WTC11 (cell line): ENCODE measurements at regions of chr11 and their contacts with region 1.

Region 1: GRCh38 chr11:82900277-82901164 is at the start of gene PRCP:
- DNase-seq: peak; percentile 95
- ATAC-seq: peak; percentile 90
- H3K4me3 Mint-ChIP-seq: peak within 1 kb of the TSS; percentile 100
- H3K27ac Mint-ChIP-seq: peak within 1 kb of the TSS; percentile 100
- H3K4me1 Mint-ChIP-seq: peaks cover 28% of the 10 kb centered on the region
- H3K27me3 Mint-ChIP-seq: no peaks in the 10 kb centered on the region; the same call in 1 of the 2 replicates
- CTCF ChIP-seq: no peak
- total RNA-seq, gene PRCP: 53.9 to 65.1 TPM (median 63.4 TPM) in 3 replicates

Region 2: GRCh38 chr11:82733444-82734119 is 166.9 kb before region 1 on chr11 and contains the start of gene FAM181B:
- CTCF ChIA-PET with region 1: interaction called, 5 read pairs
- POLR2A ChIA-PET with region 1: interaction called, 12 read pairs
- DNase-seq: peak; percentile 83
- ATAC-seq: peak; percentile 81
- H3K4me3 Mint-ChIP-seq: peak within 1 kb of the TSS; percentile 68
- H3K27ac Mint-ChIP-seq: no peak within 1 kb of the TSS
- H3K4me1 Mint-ChIP-seq: peaks cover 34% of the 10 kb centered on the region
- H3K27me3 Mint-ChIP-seq: peaks cover 59% of the 10 kb centered on the region
- CTCF ChIP-seq: no peak
- total RNA-seq, gene FAM181B: 0.80 to 1.1 TPM (median 1.0 TPM) in 3 replicates

Region 3: DNA sequence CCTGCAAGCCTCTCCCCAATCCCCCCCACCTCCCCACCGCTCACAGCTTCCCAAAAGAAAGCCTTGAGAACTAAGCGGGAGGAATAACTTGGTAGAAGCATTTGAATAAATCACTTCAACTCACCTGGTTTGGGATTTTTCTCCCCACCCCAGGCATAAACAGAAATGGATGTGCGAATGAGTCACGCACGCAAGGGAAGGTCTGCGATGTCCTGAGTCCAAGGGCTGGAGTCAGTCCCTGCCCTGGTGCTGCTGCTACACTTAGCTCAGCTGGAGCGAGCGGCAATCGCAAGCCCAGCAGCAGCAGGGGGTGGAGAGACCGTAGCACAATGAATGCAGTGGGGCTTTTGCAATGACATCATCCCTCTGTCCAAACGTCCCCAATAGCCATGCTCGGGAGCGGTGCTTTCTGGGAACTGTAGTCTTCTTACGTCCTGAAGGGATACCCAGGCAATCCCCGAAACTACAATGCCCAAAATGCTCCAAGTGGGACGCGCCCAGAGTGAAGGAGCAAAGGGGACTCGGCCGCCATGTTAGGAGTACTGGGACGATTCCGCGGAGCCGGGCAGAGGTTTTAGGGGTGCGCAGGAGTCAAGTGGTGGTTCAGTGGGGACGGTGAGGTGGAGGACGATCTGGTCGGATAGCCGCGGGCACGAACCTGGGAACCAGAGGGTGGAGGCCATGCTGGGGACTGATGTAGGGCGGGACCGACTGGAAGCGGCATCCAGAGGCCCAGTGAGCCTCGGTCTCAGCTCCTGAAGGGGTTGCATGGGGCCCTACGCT is 171.2 kb after region 1 on chr11 and contains the start of gene RAB30:
- CTCF ChIA-PET with region 1: no interaction called
- POLR2A ChIA-PET with region 1: interaction called, 21 read pairs
- DNase-seq: peak; percentile 95
- ATAC-seq: peak; percentile 97
- H3K4me3 Mint-ChIP-seq: no peak within 1 kb of the TSS
- H3K27ac Mint-ChIP-seq: no peak within 1 kb of the TSS
- H3K4me1 Mint-ChIP-seq: peaks cover 36% of the 10 kb centered on the region
- H3K27me3 Mint-ChIP-seq: no peaks in the 10 kb centered on the region
- CTCF ChIP-seq: no peak
- total RNA-seq, gene RAB30: 6.2 to 7.5 TPM (median 6.7 TPM) in 3 replicates

Region 4: DNA sequence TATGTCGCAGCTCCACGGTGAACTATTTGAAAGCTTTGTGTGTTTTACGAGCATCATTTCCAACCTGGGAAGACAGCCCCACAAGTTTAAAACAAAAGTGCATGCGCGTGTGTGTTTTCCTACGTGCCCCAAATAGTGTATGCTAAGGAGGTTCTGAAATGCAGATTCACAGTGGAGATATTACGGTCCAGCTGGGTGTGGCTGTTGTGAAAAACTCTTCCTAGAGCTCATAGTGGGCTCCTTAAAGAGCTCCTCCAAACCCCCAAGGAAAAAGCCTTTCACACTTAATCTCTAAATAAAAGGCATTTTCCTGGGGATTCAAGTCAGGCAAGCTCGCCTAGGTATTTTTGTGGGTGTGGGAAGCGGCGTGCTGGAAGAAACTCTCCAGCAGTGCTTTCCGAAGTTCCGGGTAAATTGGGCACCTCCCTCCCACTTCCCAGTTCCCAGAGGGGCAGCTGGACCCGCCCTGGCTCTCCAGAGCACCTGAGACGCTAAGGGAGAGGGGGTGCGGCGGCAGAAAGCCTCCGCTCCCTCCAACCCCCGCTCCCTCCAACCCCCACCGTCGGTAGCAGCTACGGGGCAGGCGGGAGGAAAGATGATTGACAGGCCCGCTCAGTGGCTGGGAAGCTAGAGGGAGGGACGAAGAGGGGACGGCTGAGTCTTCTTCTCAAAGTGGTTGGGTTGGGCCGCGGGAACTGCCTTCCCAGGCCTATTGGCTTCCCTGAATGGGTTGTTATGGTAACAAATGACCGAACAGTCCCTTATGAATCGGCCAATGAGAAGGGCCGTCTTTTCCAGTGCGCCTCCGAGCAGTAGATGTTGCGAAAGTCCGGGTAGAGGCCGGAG is 255.9 kb after region 1 on chr11:
- CTCF ChIA-PET with region 1: interaction called, 5 read pairs
- POLR2A ChIA-PET with region 1: interaction called, 46 read pairs
- DNase-seq: peak; percentile 97
- ATAC-seq: peak; percentile 93
- H3K4me3 Mint-ChIP-seq: peak overlapping the region; percentile 99
- H3K27ac Mint-ChIP-seq: peak overlapping the region; percentile 92
- H3K4me1 Mint-ChIP-seq: peaks cover 20% of the 10 kb centered on the region
- H3K27me3 Mint-ChIP-seq: no peaks in the 10 kb centered on the region
- CTCF ChIP-seq: no peak